CD8-positive, alpha-beta memory T cell (primary cell): ENCODE measurements at regions of chr10 and their contacts with region 1.

Region 1: DNA sequence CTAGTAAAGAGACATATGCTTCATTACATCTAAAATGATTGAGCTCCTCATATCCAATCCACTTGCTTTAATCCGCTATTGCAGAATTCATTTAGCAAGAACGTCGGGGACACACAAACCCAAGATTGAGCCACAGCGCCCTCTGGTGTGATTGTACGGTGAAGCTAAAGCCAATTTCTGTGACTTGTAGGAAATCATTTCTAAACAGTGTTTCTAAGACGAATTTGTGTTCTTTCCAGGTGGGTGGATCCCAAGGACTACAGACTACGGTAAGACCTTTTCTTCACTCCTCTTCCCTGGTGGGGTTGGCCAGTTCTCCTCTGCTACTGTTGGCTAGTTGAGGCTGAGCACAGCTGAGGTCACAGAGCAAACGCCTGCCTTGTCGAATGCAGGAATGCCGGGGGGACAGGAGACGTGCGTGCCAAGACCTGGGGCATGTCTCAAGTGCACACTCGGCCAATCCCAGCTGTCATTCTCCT is 5.2 kb downstream of the DMBT1 start:
- DNase-seq: peak; percentile 47 to 81 (median 60)
- H3K4me3 ChIP-seq: no peak overlapping the region
- H3K4me3 Mint-ChIP-seq: peak overlapping the region in 1 of 7 donors; percentile 50
- H3K27ac ChIP-seq: no peak overlapping the region
- H3K27ac Mint-ChIP-seq: peak overlapping the region in 1 of 8 donors; percentile 24
- H3K4me1 ChIP-seq: no peaks in the 10 kb centered on the region
- H3K4me1 Mint-ChIP-seq: peaks cover 8 to 19% (median 15%) of the 10 kb centered on the region in 3 donors
- H3K27me3 ChIP-seq: no peaks in the 10 kb centered on the region
- H3K27me3 Mint-ChIP-seq: peaks cover 21 to 44% of the 10 kb centered on the region in 2 donors

Region 2: DNA sequence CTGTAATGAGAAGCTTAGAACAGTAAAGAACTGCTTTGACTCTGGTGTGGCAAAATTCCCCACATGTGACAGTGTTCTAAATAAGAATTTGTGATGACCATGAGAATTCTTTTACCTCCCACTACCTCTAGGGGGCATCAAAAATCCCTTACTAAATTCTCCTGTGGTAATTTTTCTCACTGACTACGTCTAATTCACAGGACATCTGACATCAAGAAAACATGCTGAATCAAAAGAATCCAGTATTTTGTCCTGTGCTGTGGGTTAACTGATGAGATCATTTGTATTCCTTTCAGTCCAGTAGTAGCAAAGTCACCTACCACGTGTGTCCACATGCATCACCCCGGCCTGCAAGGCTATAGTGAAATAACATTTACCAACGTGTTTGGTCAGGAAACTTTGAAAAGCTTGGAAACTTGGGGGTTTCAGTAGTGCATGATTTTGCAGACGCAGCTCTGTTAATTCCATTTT is 741.7 kb before region 1 on chr10:
- CTCF ChIA-PET with region 1: no interaction called
- POLR2A ChIA-PET with region 1: no interaction called
- DNase-seq: peak in 1 of 5 donors; percentile 7
- H3K4me3 ChIP-seq: no peak overlapping the region
- H3K4me3 Mint-ChIP-seq: no peak overlapping the region
- H3K27ac ChIP-seq: no peak overlapping the region
- H3K27ac Mint-ChIP-seq: no peak overlapping the region
- H3K4me1 ChIP-seq: no peaks in the 10 kb centered on the region
- H3K4me1 Mint-ChIP-seq: peaks cover 0 to 2% (median 0%) of the 10 kb centered on the region in 3 donors
- H3K27me3 ChIP-seq: no peaks in the 10 kb centered on the region
- H3K27me3 Mint-ChIP-seq: no peaks in the 10 kb centered on the region

Region 3: GRCh38 chr10:122298598-122299301 is 267.0 kb before region 1 on chr10:
- CTCF ChIA-PET with region 1: interaction called, 17 read pairs
- POLR2A ChIA-PET with region 1: no interaction called
- DNase-seq: peak; percentile 39 to 65 (median 48)
- H3K4me3 ChIP-seq: no peak overlapping the region
- H3K4me3 Mint-ChIP-seq: peak overlapping the region in 5 of 7 donors; percentile 35 to 86 (median 59)
- H3K27ac ChIP-seq: no peak overlapping the region
- H3K27ac Mint-ChIP-seq: peak overlapping the region in 5 of 8 donors; percentile 7 to 92 (median 52)
- H3K4me1 ChIP-seq: peaks cover 13% of the 10 kb centered on the region
- H3K4me1 Mint-ChIP-seq: peaks cover 12 to 20% (median 13%) of the 10 kb centered on the region in 3 donors
- H3K27me3 ChIP-seq: no peaks in the 10 kb centered on the region
- H3K27me3 Mint-ChIP-seq: peaks cover 6 to 14% of the 10 kb centered on the region in 2 donors

Region 4: DNA sequence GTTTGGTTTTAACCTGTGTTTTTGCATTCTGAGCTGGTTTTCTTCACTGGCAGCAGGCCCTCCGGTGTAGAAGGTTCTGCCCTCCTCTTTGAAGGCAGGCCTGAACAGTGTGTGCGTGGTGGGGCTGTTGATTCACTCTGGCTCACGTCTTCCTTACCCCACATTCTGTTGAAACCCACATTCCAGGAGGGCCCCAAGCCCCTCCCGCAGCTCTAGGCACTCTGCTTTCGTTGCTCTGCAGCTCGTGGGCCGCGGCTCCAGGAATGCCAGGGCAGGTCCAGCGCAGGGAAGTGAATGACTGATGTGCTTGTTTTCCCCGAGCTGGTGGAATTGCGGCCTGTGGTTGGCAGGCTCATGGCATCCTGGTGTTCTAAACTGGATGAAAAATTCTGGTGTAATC is 55.4 kb before region 1 on chr10:
- CTCF ChIA-PET with region 1: interaction called, 28 read pairs
- POLR2A ChIA-PET with region 1: interaction called, 3 read pairs
- DNase-seq: no peak
- H3K4me3 ChIP-seq: no peak overlapping the region
- H3K4me3 Mint-ChIP-seq: no peak overlapping the region
- H3K27ac ChIP-seq: no peak overlapping the region
- H3K27ac Mint-ChIP-seq: no peak overlapping the region
- H3K4me1 ChIP-seq: peaks cover 7% of the 10 kb centered on the region
- H3K4me1 Mint-ChIP-seq: peaks cover 19 to 27% (median 23%) of the 10 kb centered on the region in 3 donors
- H3K27me3 ChIP-seq: no peaks in the 10 kb centered on the region
- H3K27me3 Mint-ChIP-seq: peaks cover 1 to 6% of the 10 kb centered on the region in 2 donors

Region 5: DNA sequence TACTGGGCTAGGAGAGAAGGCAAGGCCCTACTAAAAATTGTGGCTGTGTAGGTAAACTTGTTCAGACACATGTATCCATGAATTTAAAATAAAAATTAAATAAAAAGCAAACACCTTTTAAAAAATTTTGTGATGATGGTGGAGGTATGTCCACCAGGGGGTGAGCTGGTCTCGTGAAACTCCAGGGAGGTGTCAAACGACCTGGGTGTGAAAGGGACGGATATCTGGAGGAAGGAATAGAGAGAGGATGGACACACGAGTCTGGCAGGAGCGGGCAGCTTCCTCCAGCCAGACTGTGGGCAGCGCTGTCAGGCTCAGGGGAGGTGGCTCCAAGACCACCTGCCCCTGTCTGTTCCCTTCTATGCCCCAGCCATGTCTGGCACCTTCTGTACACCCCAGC is 40.0 kb before region 1 on chr10:
- CTCF ChIA-PET with region 1: interaction called, 20 read pairs
- POLR2A ChIA-PET with region 1: no interaction called
- DNase-seq: peak in 1 of 5 donors; percentile 15
- H3K4me3 ChIP-seq: no peak overlapping the region
- H3K4me3 Mint-ChIP-seq: no peak overlapping the region
- H3K27ac ChIP-seq: no peak overlapping the region
- H3K27ac Mint-ChIP-seq: peak overlapping the region in 1 of 8 donors; percentile 47
- H3K4me1 ChIP-seq: no peaks in the 10 kb centered on the region
- H3K4me1 Mint-ChIP-seq: peaks cover 4 to 5% (median 4%) of the 10 kb centered on the region in 3 donors
- H3K27me3 ChIP-seq: no peaks in the 10 kb centered on the region
- H3K27me3 Mint-ChIP-seq: peaks cover 0 to 5% of the 10 kb centered on the region in 2 donors

Region 6: GRCh38 chr10:122551450-122551849 is 14.3 kb before region 1 on chr10:
- CTCF ChIA-PET with region 1: interaction called, 30 read pairs
- POLR2A ChIA-PET with region 1: no interaction called
- DNase-seq: peak; percentile 12 to 62 (median 23)
- H3K4me3 ChIP-seq: no peak overlapping the region
- H3K4me3 Mint-ChIP-seq: peak overlapping the region in 5 of 7 donors; percentile 2 to 40 (median 23)
- H3K27ac ChIP-seq: no peak overlapping the region
- H3K27ac Mint-ChIP-seq: peak overlapping the region; percentile 29 to 88 (median 67)
- H3K4me1 ChIP-seq: peaks cover 15% of the 10 kb centered on the region
- H3K4me1 Mint-ChIP-seq: peaks cover 22 to 32% (median 25%) of the 10 kb centered on the region in 3 donors
- H3K27me3 ChIP-seq: no peaks in the 10 kb centered on the region
- H3K27me3 Mint-ChIP-seq: peaks cover 0 to 4% of the 10 kb centered on the region in 2 donors

Region 7: GRCh38 chr10:122665329-122665860 is 99.6 kb after region 1 on chr10:
- CTCF ChIA-PET with region 1: no interaction called
- POLR2A ChIA-PET with region 1: no interaction called
- DNase-seq: no peak
- H3K4me3 ChIP-seq: no peak overlapping the region
- H3K4me3 Mint-ChIP-seq: no peak overlapping the region
- H3K27ac ChIP-seq: no peak overlapping the region
- H3K27ac Mint-ChIP-seq: no peak overlapping the region
- H3K4me1 ChIP-seq: no peaks in the 10 kb centered on the region
- H3K4me1 Mint-ChIP-seq: no peaks in the 10 kb centered on the region
- H3K27me3 ChIP-seq: no peaks in the 10 kb centered on the region
- H3K27me3 Mint-ChIP-seq: peaks cover 16 to 36% of the 10 kb centered on the region in 2 donors